HepG2 (cell line): ENCODE measurements at regions of chr16 and their contacts with region 1.

Region 1: DNA sequence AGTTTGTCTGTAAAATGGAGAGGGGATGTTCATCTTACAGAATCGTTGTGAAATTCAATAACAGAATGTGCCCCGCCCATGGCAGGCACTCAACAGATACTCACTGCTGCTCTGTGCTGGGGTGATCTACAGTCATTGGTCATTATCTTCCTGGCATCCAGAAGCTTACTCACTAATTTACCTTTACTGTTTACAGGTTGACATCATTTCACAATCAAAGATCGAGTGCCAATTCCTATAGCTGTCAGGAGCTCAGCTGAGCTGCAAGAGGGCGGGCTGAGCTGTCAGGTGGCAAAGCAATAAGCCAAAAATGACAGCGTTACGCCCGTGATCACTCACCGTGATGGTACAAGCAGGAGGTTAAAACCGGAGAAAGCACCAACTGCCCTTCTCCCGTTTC is 51.2 kb downstream of the LITAF start:
- DNase-seq: peak; percentile 39
- ATAC-seq: no peak
- H3K4me3 ChIP-seq: no peak overlapping the region
- H3K27ac ChIP-seq: no peak overlapping the region
- H3K4me1 ChIP-seq: peaks cover 19% of the 10 kb centered on the region
- H3K27me3 ChIP-seq: peaks cover 0 to 2% of the 10 kb centered on the region in 2 experiments; a peak in 2 of 5 replicates
- CTCF ChIP-seq: no peak
- EP300 ChIP-seq: no peak
- POLR2A ChIP-seq: no peak
- RAD21 ChIP-seq: no peak

Region 2: GRCh38 chr16:10964039-10964890 is 571.2 kb before region 1 on chr16:
- CTCF ChIA-PET with region 1: no interaction called
- POLR2A ChIA-PET with region 1: no interaction called
- in situ Hi-C with region 1: no loop called
- intact Hi-C with region 1: loop called (anchors 5 kb)
- DNase-seq: peak; percentile 74
- ATAC-seq: peak; percentile 96
- H3K4me3 ChIP-seq: no peak overlapping the region
- H3K27ac ChIP-seq: no peak overlapping the region
- H3K4me1 ChIP-seq: peaks cover 14% of the 10 kb centered on the region
- H3K27me3 ChIP-seq: no peaks in the 10 kb centered on the region
- CTCF ChIP-seq: peak; percentile 99
- EP300 ChIP-seq: peak in 1 of 2 experiments; percentile 52; a peak in 1 of 4 replicates
- POLR2A ChIP-seq: no peak
- RAD21 ChIP-seq: peak; percentile 97

Region 3: DNA sequence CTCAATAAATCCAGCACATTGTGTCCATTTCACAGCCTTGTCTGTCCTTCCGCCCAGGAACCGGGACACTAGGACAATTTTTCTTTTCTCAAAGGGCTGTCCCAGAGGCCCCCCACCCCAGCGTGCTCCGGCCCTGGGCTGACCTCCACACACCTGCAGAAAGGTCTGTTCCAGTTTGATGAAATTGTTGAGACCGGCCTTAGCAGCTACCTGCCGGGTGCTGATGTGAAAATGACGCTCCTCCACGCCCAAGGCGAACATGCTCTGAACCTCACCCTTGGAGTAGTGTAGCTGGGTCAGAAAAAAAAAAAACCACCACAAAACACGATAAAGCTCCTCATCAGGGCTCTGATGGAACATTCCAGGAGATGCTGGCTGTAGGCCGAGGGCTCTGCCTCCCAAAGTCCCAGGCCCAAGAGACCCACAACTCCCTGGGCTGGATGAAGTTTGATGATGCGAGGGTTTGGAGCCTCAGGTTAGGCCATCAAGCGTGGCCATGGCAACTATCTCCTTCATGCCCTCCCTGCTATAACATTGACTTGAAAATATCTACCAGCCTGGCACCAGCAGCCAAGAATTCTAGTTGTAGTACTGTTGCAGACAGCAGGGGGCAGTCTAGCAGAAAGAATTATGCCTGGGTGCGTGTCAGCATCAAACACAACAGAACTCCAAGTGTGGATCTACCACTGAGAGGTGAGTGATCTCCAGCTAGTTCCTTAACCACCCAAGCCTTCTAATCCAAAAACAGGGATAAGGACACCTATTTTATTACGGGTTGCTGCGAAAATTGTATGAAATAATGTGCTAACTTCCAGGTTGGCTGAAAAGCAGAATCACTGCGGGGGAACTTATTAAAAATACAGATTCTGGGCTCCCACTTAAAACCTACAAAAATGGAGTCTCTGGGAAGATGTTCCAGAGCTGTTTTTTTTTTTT is 128.2 kb before region 1 on chr16:
- CTCF ChIA-PET with region 1: interaction called, 18 read pairs
- POLR2A ChIA-PET with region 1: no interaction called
- in situ Hi-C with region 1: no loop called
- intact Hi-C with region 1: loop called (anchors 1 kb)
- DNase-seq: peak; percentile 78
- ATAC-seq: peak; percentile 54
- H3K4me3 ChIP-seq: no peak overlapping the region
- H3K27ac ChIP-seq: no peak overlapping the region
- H3K4me1 ChIP-seq: peaks cover 11% of the 10 kb centered on the region
- H3K27me3 ChIP-seq: peaks cover 17 to 29% of the 10 kb centered on the region in 2 experiments; a peak in 4 of 5 replicates
- CTCF ChIP-seq: peak; percentile 96
- EP300 ChIP-seq: no peak
- POLR2A ChIP-seq: no peak
- RAD21 ChIP-seq: peak; percentile 91

Region 4: DNA sequence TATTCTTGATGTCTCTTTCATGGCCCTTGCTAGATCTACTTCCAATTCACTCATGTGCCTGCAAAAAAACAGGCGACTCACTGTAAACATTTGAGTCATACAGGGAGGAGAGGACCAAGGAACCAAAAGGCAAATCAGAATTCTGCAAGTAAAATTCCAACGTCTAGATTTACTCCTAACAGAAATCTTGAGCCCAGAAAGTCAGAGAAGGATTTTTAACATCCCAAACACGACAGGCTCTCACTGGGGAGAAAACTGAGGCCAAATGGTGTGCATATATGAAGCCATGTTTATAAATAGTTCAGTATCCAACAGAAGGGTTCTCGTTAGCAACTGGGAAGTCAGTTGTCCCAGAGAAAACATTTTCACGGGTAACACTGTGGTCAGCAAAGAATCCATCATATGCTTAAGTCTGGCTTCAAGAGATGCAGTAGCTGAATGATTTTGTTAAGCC is 11.2 kb after region 1 on chr16:
- CTCF ChIA-PET with region 1: no interaction called
- POLR2A ChIA-PET with region 1: no interaction called
- in situ Hi-C with region 1: no loop called
- intact Hi-C with region 1: no loop called
- DNase-seq: no peak
- ATAC-seq: no peak
- H3K4me3 ChIP-seq: no peak overlapping the region
- H3K27ac ChIP-seq: no peak overlapping the region
- H3K4me1 ChIP-seq: peaks cover under 1% of the 10 kb centered on the region; the same call in 1 of the 2 replicates
- H3K27me3 ChIP-seq: no peaks in the 10 kb centered on the region
- CTCF ChIP-seq: no peak
- EP300 ChIP-seq: no peak
- POLR2A ChIP-seq: no peak
- RAD21 ChIP-seq: no peak

Region 5: GRCh38 chr16:11611871-11612664 is 76.6 kb after region 1 on chr16:
- CTCF ChIA-PET with region 1: interaction called, 3 read pairs
- POLR2A ChIA-PET with region 1: no interaction called
- in situ Hi-C with region 1: no loop called
- intact Hi-C with region 1: loop called (anchors 1 kb)
- DNase-seq: peak; percentile 83
- ATAC-seq: peak; percentile 88
- H3K4me3 ChIP-seq: peak overlapping the region in 2 of 3 experiments; percentile 9 to 41; a peak in 3 of 6 replicates
- H3K27ac ChIP-seq: no peak overlapping the region
- H3K4me1 ChIP-seq: peaks cover 43% of the 10 kb centered on the region
- H3K27me3 ChIP-seq: peaks cover 10 to 32% of the 10 kb centered on the region in 2 experiments
- CTCF ChIP-seq: peak; percentile 30
- EP300 ChIP-seq: peak; percentile 78 to 79; a peak in 1 of 4 replicates
- POLR2A ChIP-seq: no peak
- RAD21 ChIP-seq: 0 out of 2 replicates have a peak, but pooled peaks have one; percentile 19

Region 6: GRCh38 chr16:11658894-11659708 is 123.6 kb after region 1 on chr16:
- CTCF ChIA-PET with region 1: interaction called, 17 read pairs
- POLR2A ChIA-PET with region 1: no interaction called
- in situ Hi-C with region 1: no loop called
- intact Hi-C with region 1: loop called (anchors 5 kb)
- DNase-seq: no peak
- ATAC-seq: peak; percentile 46
- H3K4me3 ChIP-seq: no peak overlapping the region
- H3K27ac ChIP-seq: no peak overlapping the region
- H3K4me1 ChIP-seq: peaks cover 21% of the 10 kb centered on the region
- H3K27me3 ChIP-seq: peaks cover 6 to 54% of the 10 kb centered on the region in 2 experiments
- CTCF ChIP-seq: no peak
- EP300 ChIP-seq: no peak
- POLR2A ChIP-seq: no peak
- RAD21 ChIP-seq: no peak

Region 7: DNA sequence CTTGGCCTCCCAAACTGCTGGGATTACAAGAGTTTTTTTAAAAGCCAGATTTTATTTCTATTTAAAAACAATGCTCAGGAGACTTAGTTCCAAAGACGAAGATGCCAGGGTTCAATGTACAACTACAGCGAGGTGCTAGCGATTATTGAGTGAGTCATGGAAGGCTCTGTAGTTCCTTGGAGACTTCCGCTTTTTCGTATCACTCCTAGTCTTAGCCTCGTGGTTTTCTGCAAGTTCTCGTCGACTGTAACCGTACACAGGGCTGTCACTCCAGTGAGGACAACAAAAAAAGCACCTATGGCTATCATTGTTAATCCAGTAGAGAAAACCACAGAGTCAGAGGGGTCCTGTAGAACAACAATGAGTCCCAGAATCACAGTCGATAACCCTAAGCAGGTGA is 284.3 kb after region 1 on chr16:
- CTCF ChIA-PET with region 1: no interaction called
- POLR2A ChIA-PET with region 1: no interaction called
- in situ Hi-C with region 1: loop called (anchors 10 kb)
- intact Hi-C with region 1: no loop called
- DNase-seq: no peak
- ATAC-seq: no peak
- H3K4me3 ChIP-seq: no peak overlapping the region
- H3K27ac ChIP-seq: no peak overlapping the region
- H3K4me1 ChIP-seq: peaks cover 43% of the 10 kb centered on the region
- H3K27me3 ChIP-seq: 0 out of 5 replicates have a peak, but pooled peaks cover 0 to 5% of the 10 kb centered on the region in 2 experiments
- CTCF ChIP-seq: no peak
- EP300 ChIP-seq: no peak
- POLR2A ChIP-seq: no peak
- RAD21 ChIP-seq: no peak